B cell (primary cell): ENCODE measurements at regions of chr2 and their contacts with region 1.

Region 1: GRCh38 chr2:72915907-72916742 is 1.2 kb upstream of the EMX1 start:
- DNase-seq: peak; percentile 74
- ATAC-seq: peak; percentile 40
- H3K4me3 ChIP-seq: peak overlapping the region; percentile 12 to 53 (median 37)
- H3K4me3 Mint-ChIP-seq: peak overlapping the region; percentile 86
- H3K27ac ChIP-seq: no peak overlapping the region
- H3K27ac Mint-ChIP-seq: no peak overlapping the region
- H3K4me1 ChIP-seq: peaks cover 52 to 69% of the 10 kb centered on the region in 2 donors
- H3K4me1 Mint-ChIP-seq: peaks cover 40% of the 10 kb centered on the region
- H3K27me3 ChIP-seq: peaks cover 0 to 80% (median 71%) of the 10 kb centered on the region in 4 experiments
- H3K27me3 Mint-ChIP-seq: peaks cover 60% of the 10 kb centered on the region
- CTCF ChIP-seq: no peak

Region 2: DNA sequence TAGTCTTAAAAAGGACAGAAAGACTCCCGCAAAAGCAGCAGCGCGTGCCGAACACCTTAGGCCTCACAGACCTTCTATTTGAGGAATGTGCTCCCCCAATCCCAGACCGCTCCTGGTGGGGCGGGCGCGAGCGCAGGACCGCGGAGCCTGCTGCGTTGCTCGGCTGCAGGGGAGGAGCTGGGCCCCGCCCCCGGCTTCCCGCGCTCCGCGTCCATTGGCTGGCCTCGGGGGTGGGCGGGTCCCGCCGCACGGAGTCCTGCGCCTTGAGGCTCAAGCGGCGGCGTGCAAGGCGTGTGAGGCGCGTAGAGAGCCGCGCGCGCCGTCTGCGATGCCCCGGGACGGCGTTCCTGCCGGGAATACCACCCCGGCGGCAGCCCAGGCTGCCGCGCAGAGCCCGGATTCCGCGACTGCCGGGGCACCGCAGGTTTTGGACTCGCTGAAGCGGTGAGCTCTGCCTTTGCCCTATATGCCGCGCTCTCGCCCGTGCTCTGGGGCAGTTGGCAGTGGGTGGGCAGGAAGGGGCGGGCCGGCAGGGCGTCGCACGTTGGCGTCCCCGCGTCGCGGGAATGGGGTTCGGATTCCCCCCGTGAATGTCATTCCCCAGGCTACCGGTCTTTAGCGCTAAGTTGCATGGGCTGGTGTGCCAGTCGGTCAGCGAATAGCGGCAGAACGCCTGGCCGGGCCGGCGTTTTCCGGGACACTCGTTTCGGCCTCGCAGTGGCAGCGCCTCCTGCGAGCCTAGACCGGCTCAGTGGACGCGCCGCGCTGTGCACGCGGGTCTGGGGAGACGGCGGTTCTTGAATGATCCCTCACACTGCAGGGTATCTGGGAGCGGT is 1639.6 kb before region 1 on chr2:
- CTCF ChIA-PET with region 1: no interaction called
- POLR2A ChIA-PET with region 1: no interaction called
- intact Hi-C with region 1: loop called (anchors 5 kb)
- DNase-seq: peak; percentile 90
- ATAC-seq: peak; percentile 99
- H3K4me3 ChIP-seq: peak overlapping the region; percentile 23 to 77 (median 58)
- H3K4me3 Mint-ChIP-seq: peak overlapping the region; percentile 87
- H3K27ac ChIP-seq: no peak overlapping the region
- H3K27ac Mint-ChIP-seq: peak overlapping the region; percentile 24
- H3K4me1 ChIP-seq: peaks cover 18 to 19% of the 10 kb centered on the region in 2 donors
- H3K4me1 Mint-ChIP-seq: peaks cover 22% of the 10 kb centered on the region
- H3K27me3 ChIP-seq: peaks cover 0 to 19% (median 9%) of the 10 kb centered on the region in 4 experiments
- H3K27me3 Mint-ChIP-seq: peaks cover 54% of the 10 kb centered on the region
- CTCF ChIP-seq: no peak

Region 3: DNA sequence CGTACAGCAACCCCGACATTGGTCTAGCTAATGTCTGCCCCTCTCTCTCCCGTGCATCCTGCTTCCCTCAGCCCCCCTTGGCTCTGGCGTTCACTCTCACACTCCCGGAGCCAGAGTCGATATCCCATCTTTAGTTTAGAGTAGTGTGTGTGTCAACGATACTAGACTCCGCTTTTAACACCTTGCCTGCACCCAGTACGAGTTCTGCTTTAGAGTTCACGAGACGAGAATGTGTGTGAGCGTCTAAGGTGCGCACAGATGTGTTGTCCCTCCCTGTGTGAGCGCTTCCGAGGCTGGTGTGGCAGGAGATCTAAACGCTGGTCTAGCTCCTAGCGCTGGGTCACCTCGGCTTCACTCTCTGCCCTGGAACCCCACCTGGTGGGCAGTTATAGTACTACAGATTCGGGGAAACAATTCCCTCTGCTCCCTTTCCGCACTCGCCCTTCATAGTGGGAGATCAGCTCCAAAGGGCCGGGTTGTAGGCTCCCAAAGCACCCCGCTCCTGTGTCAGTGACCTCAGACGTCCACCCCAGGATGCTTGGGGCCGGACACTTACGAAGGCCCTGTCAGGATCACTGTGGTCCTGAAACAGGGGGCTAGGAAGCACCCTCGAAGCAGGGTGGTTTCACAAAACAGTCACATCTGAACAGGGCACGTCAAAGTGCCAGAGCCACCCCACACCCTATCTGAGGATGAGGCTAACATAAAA is 765.8 kb before region 1 on chr2:
- CTCF ChIA-PET with region 1: no interaction called
- POLR2A ChIA-PET with region 1: no interaction called
- intact Hi-C with region 1: loop called (anchors 5 kb)
- DNase-seq: peak; percentile 70
- ATAC-seq: peak; percentile 73
- H3K4me3 ChIP-seq: peak overlapping the region in 3 of 5 experiments; percentile 38 to 42 (median 40)
- H3K4me3 Mint-ChIP-seq: peak overlapping the region; percentile 91
- H3K27ac ChIP-seq: no peak overlapping the region
- H3K27ac Mint-ChIP-seq: peak overlapping the region; percentile 48
- H3K4me1 ChIP-seq: peaks cover 36 to 42% of the 10 kb centered on the region in 2 donors
- H3K4me1 Mint-ChIP-seq: peaks cover 39% of the 10 kb centered on the region
- H3K27me3 ChIP-seq: peaks cover 0 to 69% (median 33%) of the 10 kb centered on the region in 4 experiments
- H3K27me3 Mint-ChIP-seq: peaks cover 59% of the 10 kb centered on the region
- CTCF ChIP-seq: peak; percentile 71

Region 4: GRCh38 chr2:72862239-72862988 is 53.7 kb before region 1 on chr2:
- CTCF ChIA-PET with region 1: no interaction called
- POLR2A ChIA-PET with region 1: no interaction called
- intact Hi-C with region 1: no loop called
- DNase-seq: peak; percentile 87
- ATAC-seq: peak; percentile 88
- H3K4me3 ChIP-seq: peak overlapping the region in 2 of 5 experiments; percentile 34 to 50
- H3K4me3 Mint-ChIP-seq: peak overlapping the region; percentile 68
- H3K27ac ChIP-seq: no peak overlapping the region
- H3K27ac Mint-ChIP-seq: no peak overlapping the region
- H3K4me1 ChIP-seq: peaks cover 10% of the 10 kb centered on the region in 2 donors
- H3K4me1 Mint-ChIP-seq: peaks cover 12% of the 10 kb centered on the region
- H3K27me3 ChIP-seq: peaks cover 0 to 29% (median 22%) of the 10 kb centered on the region in 4 experiments
- H3K27me3 Mint-ChIP-seq: peaks cover 44% of the 10 kb centered on the region
- CTCF ChIP-seq: peak; percentile 99

Region 5: GRCh38 chr2:73112913-73113633 is 196.9 kb after region 1 on chr2 and contains the start of gene RAB11FIP5:
- CTCF ChIA-PET with region 1: no interaction called
- POLR2A ChIA-PET with region 1: no interaction called
- intact Hi-C with region 1: loop called (anchors 5 kb)
- DNase-seq: peak; percentile 83
- ATAC-seq: peak; percentile 91
- H3K4me3 ChIP-seq: peak within 1 kb of the TSS; percentile 15 to 89 (median 74)
- H3K4me3 Mint-ChIP-seq: peak within 1 kb of the TSS; percentile 83
- H3K27ac ChIP-seq: peak within 1 kb of the TSS in 1 of 2 donors; percentile 53
- H3K27ac Mint-ChIP-seq: peak within 1 kb of the TSS; percentile 67
- H3K4me1 ChIP-seq: peaks cover 17% of the 10 kb centered on the region in 2 donors
- H3K4me1 Mint-ChIP-seq: peaks cover 8% of the 10 kb centered on the region
- H3K27me3 ChIP-seq: peaks cover 0 to 23% (median 8%) of the 10 kb centered on the region in 4 experiments
- H3K27me3 Mint-ChIP-seq: peaks cover 3% of the 10 kb centered on the region
- CTCF ChIP-seq: no peak
- total RNA-seq, gene RAB11FIP5: 4.6 and 5.1 TPM in 2 replicates